Activated CD8-positive, alpha-beta T cell treated with anti-CD3 and anti-CD28 coated beads for 36 hours (primary cell): ENCODE measurements at regions of chr12 and their contacts with region 1.

Region 1: GRCh38 chr12:124940549-124941527 is 26.4 kb upstream of the UBC start:
- DNase-seq: peak; percentile 94
- ATAC-seq: peak; percentile 41
- H3K4me3 Mint-ChIP-seq: no peak overlapping the region
- H3K27ac Mint-ChIP-seq: no peak overlapping the region
- H3K4me1 Mint-ChIP-seq: peaks cover 12% of the 10 kb centered on the region
- H3K27me3 Mint-ChIP-seq: no peaks in the 10 kb centered on the region
- CTCF ChIP-seq: peak; percentile 93

Region 2: GRCh38 chr12:124917135-124917840 is 23.6 kb before region 1 on chr12:
- CTCF ChIA-PET with region 1: interaction called, 183 read pairs
- POLR2A ChIA-PET with region 1: interaction called, 256 read pairs
- intact Hi-C with region 1: loop called (anchors 2 kb)
- DNase-seq: peak; percentile 97
- ATAC-seq: peak; percentile 69
- H3K4me3 Mint-ChIP-seq: peak overlapping the region; percentile 100
- H3K27ac Mint-ChIP-seq: peak overlapping the region; percentile 100
- H3K4me1 Mint-ChIP-seq: peaks cover 83% of the 10 kb centered on the region
- H3K27me3 Mint-ChIP-seq: no peaks in the 10 kb centered on the region
- CTCF ChIP-seq: no peak

Region 3: DNA sequence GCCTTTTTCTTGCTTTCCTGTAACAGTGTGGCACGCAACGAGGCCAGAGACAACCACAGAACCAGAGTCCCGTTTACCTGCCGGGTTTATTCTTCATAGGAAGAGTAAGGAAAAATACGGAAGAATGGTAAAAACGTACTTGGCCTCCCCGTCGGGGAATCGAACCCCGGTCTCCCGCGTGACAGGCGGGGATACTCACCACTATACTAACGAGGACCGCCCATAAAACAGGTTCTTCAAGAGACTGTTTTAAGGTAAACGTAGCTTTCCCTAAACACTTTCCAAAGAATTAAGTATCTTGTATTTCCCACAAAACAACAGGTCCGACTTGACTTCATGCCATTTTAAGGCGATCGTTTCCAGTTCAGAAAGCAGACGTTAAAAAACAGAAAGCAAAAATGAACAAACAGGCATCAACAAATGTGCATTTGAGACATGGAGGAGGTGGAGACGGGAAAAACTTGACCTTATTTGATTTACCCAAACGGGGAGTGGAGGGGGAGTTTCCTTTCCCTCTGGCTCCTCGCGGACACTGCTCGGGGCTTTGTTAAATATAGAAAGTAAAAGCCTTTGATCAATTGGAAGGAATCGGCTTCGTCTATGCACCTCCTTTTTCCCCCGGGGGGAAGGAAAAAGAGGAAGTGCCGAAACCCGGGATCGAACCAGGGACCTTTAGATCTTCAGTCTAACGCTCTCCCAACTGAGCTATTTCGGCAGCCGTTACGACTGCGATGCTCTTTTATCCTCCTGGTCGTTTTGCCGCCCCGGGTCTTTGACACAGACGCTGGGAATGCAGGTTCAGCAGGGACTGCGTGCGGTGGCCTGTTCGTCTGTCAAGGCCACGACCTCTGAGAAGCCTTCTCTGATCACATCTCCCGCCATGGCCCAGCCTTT is 13.4 kb before region 1 on chr12:
- CTCF ChIA-PET with region 1: interaction called, 183 read pairs
- POLR2A ChIA-PET with region 1: interaction called, 256 read pairs
- intact Hi-C with region 1: loop called (anchors 1 kb)
- DNase-seq: peak; percentile 96
- ATAC-seq: peak; percentile 83
- H3K4me3 Mint-ChIP-seq: peak overlapping the region; percentile 95
- H3K27ac Mint-ChIP-seq: peak overlapping the region; percentile 98
- H3K4me1 Mint-ChIP-seq: peaks cover 50% of the 10 kb centered on the region
- H3K27me3 Mint-ChIP-seq: peaks cover 5% of the 10 kb centered on the region
- CTCF ChIP-seq: no peak

Region 4: GRCh38 chr12:124952801-124953200 is 12.0 kb after region 1 on chr12:
- CTCF ChIA-PET with region 1: interaction called, 13 read pairs
- POLR2A ChIA-PET with region 1: interaction called, 3 read pairs
- intact Hi-C with region 1: no loop called
- DNase-seq: no peak
- ATAC-seq: no peak
- H3K4me3 Mint-ChIP-seq: no peak overlapping the region
- H3K27ac Mint-ChIP-seq: no peak overlapping the region
- H3K4me1 Mint-ChIP-seq: no peaks in the 10 kb centered on the region
- H3K27me3 Mint-ChIP-seq: no peaks in the 10 kb centered on the region
- CTCF ChIP-seq: no peak

Region 5: DNA sequence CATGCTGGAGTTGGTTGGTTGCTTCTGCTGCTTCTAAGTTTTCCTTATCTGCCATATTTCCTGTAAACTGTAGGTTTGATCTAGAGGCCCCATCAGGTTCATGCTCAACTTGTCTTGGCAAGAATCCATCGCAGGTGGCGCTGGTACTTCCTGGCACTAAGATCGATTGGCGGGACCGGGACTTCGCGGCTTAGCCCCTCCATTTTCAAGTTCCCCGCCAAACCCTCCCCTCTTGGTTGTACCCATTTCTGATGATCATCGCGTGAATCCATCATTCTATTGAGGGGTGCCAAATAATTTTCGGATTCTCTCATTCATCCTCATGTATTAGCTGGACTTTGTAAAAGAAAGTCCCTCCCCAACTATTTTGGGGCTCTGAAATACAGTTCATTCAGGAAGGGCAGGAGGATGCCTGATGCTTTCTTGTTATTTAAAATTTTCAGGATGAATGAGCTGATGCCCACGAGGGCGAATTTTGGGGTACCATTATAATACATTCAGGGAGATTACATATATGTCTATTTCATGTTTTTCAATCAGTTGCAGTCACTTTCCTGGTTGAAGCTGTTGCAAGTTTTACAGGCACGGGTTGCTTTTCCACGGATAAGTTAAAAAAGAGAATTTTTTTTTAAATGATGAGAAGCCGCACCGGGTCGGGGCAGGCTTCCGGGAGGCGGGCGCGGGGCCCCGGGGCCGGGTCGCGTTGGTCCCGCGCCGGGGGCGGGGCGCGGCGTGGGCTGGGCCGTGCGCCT is 52.2 kb after region 1 on chr12:
- CTCF ChIA-PET with region 1: interaction called, 6 read pairs
- POLR2A ChIA-PET with region 1: interaction called, 14 read pairs
- intact Hi-C with region 1: no loop called
- DNase-seq: peak; percentile 97
- ATAC-seq: peak; percentile 58
- H3K4me3 Mint-ChIP-seq: peak overlapping the region; percentile 76
- H3K27ac Mint-ChIP-seq: peak overlapping the region; percentile 92
- H3K4me1 Mint-ChIP-seq: peaks cover 23% of the 10 kb centered on the region
- H3K27me3 Mint-ChIP-seq: no peaks in the 10 kb centered on the region
- CTCF ChIP-seq: peak; percentile 67

Region 6: DNA sequence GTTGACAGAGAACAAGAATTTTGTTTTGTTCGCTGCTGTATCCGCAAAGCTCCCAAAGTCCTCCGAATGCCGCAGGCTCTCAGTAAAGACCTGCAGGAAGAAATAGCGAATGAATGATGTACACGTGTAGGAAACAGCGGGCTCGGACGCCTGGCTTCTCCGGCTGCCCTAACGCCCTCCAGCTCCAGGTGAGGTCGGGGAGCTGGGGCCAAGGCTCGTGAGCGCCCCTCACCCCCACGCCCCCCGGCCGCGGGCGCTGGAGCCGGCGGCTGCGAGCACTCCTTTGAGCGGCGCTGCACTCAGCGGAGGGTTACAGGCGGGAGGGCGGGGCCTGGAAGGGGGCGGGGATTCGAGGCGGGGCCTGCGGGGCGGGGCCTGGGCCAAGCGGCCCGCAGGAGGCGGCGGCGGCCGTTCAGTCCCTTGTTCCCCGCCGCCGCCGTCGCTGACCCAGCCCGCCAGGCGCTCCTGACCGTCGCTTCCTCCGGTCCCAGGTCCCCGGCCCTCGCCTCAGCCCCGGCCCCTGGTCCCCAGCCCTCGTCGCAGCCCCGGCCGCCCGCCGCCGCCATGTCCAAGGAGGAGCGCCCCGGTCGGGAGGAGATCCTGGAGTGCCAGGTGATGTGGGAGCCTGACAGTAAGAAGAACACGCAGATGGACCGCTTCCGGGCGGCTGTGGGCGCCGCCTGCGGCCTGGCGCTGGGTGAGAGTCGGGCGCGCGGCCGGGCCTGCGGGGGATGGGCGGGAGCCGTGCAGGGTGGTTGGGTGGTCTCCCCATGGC is 124.4 kb after region 1 on chr12 and contains the start of gene AACS:
- CTCF ChIA-PET with region 1: no interaction called
- POLR2A ChIA-PET with region 1: no interaction called
- intact Hi-C with region 1: no loop called
- DNase-seq: peak; percentile 76
- ATAC-seq: peak; percentile 99
- H3K4me3 Mint-ChIP-seq: peak within 1 kb of the TSS; percentile 82
- H3K27ac Mint-ChIP-seq: peak within 1 kb of the TSS; percentile 42
- H3K4me1 Mint-ChIP-seq: peaks cover 13% of the 10 kb centered on the region
- H3K27me3 Mint-ChIP-seq: no peaks in the 10 kb centered on the region
- CTCF ChIP-seq: no peak
- total RNA-seq, gene AACS: 15.7 to 17.6 TPM